Ascending aorta (tissue), 2 donors: ENCODE measurements at regions of chr6 and their contacts with region 1.

Region 1: DNA sequence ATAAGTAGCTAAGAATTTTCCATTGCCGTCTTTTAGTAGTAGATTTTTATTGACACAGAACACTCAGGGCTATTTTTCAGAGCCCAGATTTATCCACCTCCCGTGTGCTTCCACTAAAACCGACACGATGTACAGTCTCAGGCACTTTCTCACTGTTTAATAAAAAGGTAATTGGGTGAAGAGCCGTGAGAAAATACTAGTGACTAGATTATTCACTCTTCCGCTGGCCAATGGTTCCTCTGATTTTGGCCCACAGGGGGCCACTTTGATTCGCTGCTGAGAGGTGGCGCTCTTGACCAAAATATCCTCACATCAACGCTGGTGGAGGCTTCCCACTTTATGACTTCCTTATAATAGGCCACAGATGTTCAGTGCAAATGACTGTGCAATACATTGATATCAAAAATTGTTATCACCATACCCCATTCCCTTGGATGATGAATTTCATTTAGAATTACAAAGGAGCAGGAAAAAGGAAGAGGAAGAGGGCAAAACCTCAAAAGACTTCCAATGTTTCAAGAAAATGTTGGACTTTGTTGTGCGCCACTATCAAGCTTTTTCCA is 12.3 kb upstream of the HDDC2 start:
- DNase-seq: peak; percentile 9 to 87
- H3K4me3 ChIP-seq: no peak overlapping the region
- H3K27ac ChIP-seq: peak overlapping the region in 1 of 2 donors; percentile 29
- H3K4me1 ChIP-seq: no peaks in the 10 kb centered on the region
- H3K27me3 ChIP-seq: no peaks in the 10 kb centered on the region
- CTCF ChIP-seq: peak; percentile 77 to 90 (median 83)

Region 2: DNA sequence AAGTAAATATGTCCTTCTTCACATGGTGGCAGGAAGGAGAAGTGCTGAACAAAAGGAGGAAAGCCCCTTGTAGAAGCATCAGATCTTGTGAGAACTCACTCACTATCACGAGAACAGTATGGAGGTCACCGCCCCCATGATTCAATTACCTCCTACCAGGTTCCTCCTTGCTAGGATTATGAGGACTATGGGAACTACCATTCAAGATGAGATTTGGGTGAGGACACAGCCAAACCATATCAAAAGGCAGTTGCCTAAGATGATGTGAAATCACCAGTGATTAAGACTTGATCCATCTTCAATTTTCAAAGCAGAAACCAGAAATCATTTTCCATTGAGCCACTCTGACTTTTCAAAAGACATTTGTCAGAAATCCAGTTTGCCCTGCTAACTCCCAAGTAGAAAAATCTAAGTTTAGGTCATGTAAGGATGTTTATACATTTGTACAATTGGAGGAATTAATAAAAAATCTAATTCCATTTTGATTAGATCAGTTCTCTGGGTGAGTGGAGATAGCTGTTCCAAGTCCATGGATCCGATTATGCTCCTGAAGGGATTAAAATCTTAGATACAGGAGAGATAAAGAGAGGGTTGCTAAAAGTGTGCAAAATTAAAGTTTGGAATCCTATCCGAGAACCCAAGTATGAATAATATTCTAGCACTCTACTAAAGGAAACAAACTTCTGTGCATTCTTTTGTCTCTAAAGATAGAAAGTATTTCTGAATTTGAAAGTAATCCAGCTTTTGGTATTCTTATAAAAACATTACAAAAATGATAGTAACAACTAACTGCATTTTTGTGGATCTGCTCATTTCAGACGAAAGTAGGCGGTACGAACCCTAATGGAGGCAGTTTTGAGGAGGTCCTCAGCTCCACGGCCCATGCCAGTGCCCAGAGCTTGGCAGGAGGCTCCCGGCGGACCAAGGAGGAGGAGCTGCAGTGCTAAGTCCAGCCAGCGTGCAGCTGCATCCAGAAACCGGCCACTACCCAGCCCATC is 51.8 kb before region 1 on chr6:
- intact Hi-C with region 1: no loop called
- DNase-seq: peak in 1 of 2 donors; percentile 86
- H3K4me3 ChIP-seq: peak overlapping the region in 1 of 2 donors; percentile 16
- H3K27ac ChIP-seq: peak overlapping the region; percentile 66 to 71
- H3K4me1 ChIP-seq: peaks cover 0 to 13% of the 10 kb centered on the region in 2 donors
- H3K27me3 ChIP-seq: no peaks in the 10 kb centered on the region
- CTCF ChIP-seq: no peak

Region 3: GRCh38 chr6:125363039-125363823 is 49.1 kb after region 1 on chr6:
- intact Hi-C with region 1: loop called (anchors 5 kb)
- DNase-seq: peak; percentile 12 to 75
- H3K4me3 ChIP-seq: peak overlapping the region; percentile 68 to 76
- H3K27ac ChIP-seq: peak overlapping the region; percentile 89 to 90
- H3K4me1 ChIP-seq: peaks cover 0 to 25% of the 10 kb centered on the region in 2 donors
- H3K27me3 ChIP-seq: no peaks in the 10 kb centered on the region
- CTCF ChIP-seq: no peak

Region 4: DNA sequence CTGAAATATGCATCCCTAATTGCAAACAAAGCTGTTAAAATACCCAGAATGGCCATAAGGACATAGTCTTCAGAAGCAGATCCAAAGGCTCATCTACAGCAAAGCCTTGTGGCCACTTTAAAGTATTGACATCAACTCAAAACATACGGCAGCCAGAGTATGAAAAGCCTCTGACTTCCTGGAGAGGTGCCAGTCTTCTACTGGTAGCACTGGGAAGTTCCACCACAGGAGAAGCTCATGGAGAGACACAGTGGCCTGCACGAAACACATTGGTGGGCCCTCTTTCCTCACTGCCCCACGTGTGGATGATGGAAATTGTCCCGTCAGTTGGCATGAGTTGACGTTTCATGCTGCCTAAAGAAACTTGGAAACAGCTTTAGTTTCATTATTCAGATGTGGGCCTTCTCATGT is 232.7 kb after region 1 on chr6:
- intact Hi-C with region 1: loop called (anchors 10 kb)
- DNase-seq: no peak
- H3K4me3 ChIP-seq: peak overlapping the region in 1 of 2 donors; percentile 27
- H3K27ac ChIP-seq: no peak overlapping the region
- H3K4me1 ChIP-seq: peaks cover 0 to 6% of the 10 kb centered on the region in 2 donors
- H3K27me3 ChIP-seq: no peaks in the 10 kb centered on the region
- CTCF ChIP-seq: peak in 2 of 3 experiments; percentile 25 to 27

Region 5: GRCh38 chr6:125765944-125766343 is 451.8 kb after region 1 on chr6:
- intact Hi-C with region 1: loop called (anchors 1 kb)
- DNase-seq: no peak
- H3K4me3 ChIP-seq: no peak overlapping the region
- H3K27ac ChIP-seq: peak overlapping the region in 1 of 2 donors; percentile 69
- H3K4me1 ChIP-seq: peaks cover 0 to 23% of the 10 kb centered on the region in 2 donors
- H3K27me3 ChIP-seq: no peaks in the 10 kb centered on the region
- CTCF ChIP-seq: no peak

Region 6: GRCh38 chr6:125956506-125957390 is 642.6 kb after region 1 on chr6 and contains the start of gene HINT3:
- intact Hi-C with region 1: loop called (anchors 2 kb)
- DNase-seq: peak; percentile 91 to 98
- H3K4me3 ChIP-seq: peak within 1 kb of the TSS; percentile 87 to 91
- H3K27ac ChIP-seq: peak within 1 kb of the TSS; percentile 79 to 93
- H3K4me1 ChIP-seq: peaks cover 0 to 10% of the 10 kb centered on the region in 2 donors
- H3K27me3 ChIP-seq: no peaks in the 10 kb centered on the region
- CTCF ChIP-seq: peak; percentile 96 to 99 (median 99)
- total RNA-seq, gene HINT3: 5.2 TPM

Region 7: DNA sequence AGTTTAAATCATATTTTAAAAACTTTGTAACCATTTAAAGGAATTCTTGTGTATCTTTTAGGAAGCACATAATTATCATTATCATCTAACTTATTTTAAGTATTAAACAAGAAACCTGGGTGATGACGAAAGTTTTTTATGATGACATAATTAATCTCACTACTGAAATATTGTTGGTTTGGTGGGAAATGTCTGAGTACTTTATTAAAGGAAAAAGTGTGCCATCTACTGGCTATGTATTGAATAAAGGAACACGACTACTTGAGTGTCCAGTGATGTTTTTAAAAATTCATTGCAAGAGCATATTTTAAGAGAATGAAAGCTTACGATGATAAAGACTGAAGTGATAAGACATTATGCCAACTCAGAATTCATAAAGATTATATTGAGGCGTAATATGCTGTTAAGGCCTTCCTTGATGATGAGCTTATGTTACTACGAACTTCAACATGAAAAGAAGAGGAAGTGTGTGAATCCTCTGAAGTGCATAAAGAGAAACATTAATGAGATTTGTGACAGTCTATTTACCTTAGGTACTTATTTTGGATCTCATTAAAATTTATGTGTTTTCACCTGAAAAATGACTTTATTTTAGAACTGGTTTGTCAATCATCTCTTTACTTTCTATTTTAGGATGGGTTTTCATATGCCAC is 660.2 kb after region 1 on chr6:
- intact Hi-C with region 1: loop called (anchors 5 kb)
- DNase-seq: no peak
- H3K4me3 ChIP-seq: no peak overlapping the region
- H3K27ac ChIP-seq: no peak overlapping the region
- H3K4me1 ChIP-seq: no peaks in the 10 kb centered on the region
- H3K27me3 ChIP-seq: no peaks in the 10 kb centered on the region
- CTCF ChIP-seq: peak; percentile 13 to 54 (median 18)